Cardiac septum (tissue), 1 donor: ENCODE measurements at regions of chr2 and their contacts with region 1.

Region 1: DNA sequence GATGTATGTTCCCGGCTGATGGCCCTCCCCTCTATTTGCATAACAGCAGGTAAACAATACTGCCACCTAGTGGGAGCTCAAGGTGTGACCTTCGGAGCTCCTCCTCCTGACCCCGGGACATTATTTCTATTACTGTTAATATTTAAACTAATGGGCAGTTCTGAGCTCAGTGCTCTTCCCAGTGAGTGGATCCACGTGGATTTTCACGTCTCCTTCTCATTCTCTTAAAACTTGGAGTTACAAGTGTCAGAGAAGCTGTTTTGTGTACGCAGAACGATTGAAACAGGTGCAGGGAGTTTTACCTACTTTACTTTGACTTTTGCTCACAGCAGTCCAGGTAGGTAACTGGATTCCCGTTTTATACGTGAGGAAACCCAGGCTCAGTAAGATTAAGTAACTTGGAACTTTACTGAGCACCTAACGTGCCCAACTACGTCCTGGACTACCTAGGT is 127.3 kb downstream of the PRKCE start:
- DNase-seq: no peak

Region 2: DNA sequence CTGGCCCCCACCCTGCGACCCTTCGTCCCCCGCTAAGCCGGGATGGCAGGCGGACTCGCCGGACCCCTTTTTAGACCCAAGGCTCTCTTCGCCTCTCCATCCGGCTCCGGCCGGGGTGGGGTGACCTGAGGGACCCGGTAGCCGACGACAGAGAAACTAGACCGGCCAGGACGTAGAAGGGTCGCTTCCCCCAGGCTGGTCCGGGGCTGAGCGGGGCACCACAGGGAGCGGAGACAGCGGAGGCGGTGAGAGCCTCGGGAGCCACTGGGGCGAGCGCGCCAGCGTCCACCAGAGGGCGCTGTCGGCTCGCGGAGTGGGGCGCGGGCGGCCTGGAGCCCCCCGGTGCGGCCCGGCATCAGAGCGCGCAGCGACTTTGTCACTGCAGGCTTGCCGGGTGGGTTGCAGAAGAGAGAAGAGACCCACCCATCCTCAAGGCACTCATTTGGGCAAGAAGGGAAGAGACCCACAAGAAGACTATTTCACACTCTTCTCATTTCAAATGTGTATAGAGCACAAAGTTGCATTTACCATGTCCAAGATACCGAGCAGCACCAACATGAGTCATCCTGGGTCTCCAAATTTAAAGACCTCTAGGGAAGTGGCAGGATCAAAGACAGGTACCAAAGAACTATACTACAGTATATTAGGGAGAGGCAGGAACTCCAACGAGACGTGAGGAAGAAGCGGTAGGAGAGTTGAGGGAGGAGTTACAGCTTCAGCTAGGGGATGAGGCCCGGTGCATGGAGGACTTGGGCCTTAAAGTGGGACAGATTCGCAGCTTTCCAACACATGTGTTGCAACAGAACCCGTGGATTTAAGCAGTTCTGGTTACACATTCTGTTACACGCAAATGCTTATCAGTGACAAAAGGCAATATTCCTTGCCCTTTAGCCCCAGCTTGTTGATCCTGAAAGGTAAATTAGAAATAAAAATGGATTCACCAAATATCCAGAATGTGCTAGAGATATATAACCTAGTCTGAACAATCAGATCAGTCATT is 134.9 kb before region 1 on chr2:
- intact Hi-C with region 1: loop called (anchors 1 kb)
- DNase-seq: peak; percentile 87

Region 3: GRCh38 chr2:45650851-45651414 is 127.8 kb before region 1 on chr2:
- intact Hi-C with region 1: loop called (anchors 2 kb)
- DNase-seq: peak; percentile 96

Region 4: DNA sequence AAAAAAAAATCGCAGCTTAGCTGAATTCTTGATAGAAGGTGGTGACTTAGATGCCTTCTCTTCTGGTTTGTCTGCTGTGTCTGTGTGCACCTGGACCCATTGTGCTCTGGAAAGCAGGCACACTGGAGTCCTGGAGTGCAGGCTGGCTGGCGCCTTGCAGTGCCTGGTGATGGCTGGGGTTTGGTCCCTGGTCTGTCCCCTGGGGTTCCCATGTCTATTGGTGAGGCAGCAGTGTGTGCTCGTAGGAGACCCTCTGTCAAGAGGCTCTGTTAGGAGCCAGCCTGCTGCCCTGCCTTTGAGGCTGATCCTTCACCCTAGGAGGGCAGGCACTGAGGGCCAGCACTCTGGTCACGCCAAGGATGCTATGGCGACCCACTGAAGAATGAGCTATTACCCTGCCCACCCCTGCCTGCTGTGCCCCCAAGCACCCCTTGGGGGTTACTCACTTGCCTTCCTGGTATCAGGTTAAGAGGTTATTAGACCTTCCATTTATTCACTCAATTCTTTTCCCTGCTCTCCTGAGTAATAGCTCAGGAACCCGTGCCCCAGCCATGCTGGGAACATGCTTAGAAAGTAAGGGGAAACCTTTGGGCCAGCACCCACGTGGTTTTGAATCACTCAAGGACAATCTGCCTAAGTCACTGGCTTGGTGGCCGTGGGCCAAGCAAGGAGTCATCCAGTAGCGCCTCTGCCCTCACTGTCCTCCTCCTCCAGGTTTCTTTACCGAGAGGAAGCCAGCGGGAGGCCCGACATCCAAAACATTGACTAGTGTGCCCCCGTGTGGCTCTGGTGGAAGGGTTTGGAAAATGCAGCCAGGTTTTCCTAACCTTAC is 157.3 kb after region 1 on chr2:
- intact Hi-C with region 1: loop called (anchors 2 kb)
- DNase-seq: peak; percentile 92